Colonic mucosa (tissue), 4 donors: ENCODE measurements at regions of chr21 and their contacts with region 1.

Region 1: GRCh38 chr21:38126669-38127303 is 130.0 kb upstream of the KCNJ15 start:
- DNase-seq: peak; percentile 47
- H3K4me3 ChIP-seq: no peak overlapping the region
- H3K27ac ChIP-seq: no peak overlapping the region
- H3K4me1 ChIP-seq: no peaks in the 10 kb centered on the region
- H3K27me3 ChIP-seq: no peaks in the 10 kb centered on the region
- CTCF ChIP-seq: peak; percentile 63

Region 2: DNA sequence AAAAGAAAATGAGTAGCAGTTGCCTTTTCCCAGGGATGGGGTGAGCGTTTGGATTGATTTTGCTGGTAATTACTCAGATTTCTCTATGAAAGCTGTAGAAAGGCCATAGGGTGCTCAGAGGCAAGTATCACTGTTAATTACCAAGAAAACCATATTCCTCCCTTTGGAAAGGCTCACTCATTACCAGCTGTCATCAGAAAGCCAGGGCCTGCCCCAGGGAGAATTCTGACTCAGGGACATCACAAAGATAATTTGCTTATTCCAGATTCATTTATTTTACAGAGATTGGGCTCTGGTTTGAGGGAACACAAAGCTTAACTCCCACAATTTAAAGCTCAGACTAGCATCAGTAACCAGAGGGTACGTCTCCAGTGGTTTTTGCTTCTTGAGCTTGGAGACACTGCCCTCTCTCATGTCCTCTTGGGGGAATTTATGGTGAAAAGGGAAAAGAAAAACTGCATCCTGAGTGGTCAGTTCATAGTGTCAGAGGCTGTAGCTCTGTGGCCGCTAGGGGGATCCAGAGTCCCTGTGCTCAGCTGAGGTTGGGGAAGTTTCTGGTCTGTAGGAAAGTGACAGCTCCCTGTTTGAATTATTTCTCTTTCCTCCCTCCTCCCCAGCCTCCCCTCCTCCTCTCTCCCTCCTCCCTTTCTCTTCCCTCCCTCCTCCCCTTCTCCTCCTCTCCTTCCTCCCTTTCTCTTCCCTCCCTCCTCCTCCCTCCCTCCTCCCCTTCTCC is 414.8 kb before region 1 on chr21:
- intact Hi-C with region 1: loop called (anchors 5 kb)
- DNase-seq: peak; percentile 55
- H3K4me3 ChIP-seq: no peak overlapping the region
- H3K27ac ChIP-seq: no peak overlapping the region
- H3K4me1 ChIP-seq: no peaks in the 10 kb centered on the region
- H3K27me3 ChIP-seq: no peaks in the 10 kb centered on the region
- CTCF ChIP-seq: peak; percentile 63

Region 3: DNA sequence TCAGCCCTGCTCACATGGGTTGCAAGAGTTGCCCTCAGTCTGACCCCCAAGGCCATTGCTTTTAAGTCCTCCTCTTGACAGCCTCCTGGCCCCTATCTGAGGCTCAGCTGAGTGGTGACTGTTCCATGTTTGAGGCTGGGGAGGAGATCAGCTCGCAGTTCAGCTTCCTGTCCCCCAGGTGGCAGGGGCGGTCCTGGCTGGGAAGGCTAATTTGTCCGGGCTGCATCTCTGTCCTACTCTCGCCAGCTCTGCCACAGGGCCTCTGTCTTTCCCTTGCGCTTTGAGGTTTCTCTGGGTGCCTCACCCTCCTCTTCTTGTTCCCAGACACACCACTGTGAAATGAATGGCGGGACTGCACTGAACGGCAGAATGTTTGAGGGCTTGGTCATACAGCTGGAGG is 367.8 kb before region 1 on chr21:
- intact Hi-C with region 1: loop called (anchors 5 kb)
- DNase-seq: peak; percentile 28
- H3K4me3 ChIP-seq: no peak overlapping the region
- H3K27ac ChIP-seq: no peak overlapping the region
- H3K4me1 ChIP-seq: no peaks in the 10 kb centered on the region
- H3K27me3 ChIP-seq: no peaks in the 10 kb centered on the region
- CTCF ChIP-seq: peak; percentile 41

Region 4: DNA sequence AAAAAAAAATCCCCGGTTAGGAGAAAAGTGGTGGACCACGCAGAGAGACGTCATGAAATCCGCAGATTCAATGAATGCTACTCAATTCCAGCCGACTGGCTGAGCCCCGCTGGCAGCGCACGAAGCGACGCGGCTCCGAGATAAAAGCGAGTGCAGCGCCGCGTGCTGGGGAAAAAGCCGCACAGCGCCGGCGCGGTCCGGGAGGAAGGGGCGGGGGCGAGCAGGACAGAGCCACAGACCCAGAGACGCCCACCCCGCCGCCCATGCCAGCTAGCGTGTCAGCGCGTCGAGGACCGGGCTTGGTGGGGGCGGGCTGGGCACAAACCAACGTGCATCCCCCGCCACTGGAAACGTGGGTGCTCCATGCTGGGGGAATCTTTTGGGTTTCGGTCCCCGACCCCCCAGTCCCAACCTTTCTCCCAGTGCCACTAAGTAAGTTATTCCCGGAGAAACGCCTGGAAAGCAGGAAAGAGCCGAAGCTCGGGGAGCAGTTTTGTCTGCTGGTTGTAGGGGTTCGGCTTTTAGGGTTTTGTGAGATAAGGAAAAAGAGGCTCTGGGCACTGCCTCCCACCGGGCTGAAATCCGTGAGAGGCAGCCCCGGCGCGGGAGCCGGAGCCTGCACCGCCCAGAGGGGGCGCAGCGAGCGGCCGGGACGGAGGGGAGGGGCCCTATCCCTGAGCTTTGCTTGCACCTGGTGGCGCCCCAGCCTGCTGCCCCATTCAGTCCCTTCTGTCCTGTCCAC is 210.3 kb before region 1 on chr21 and contains the start of gene KCNJ6:
- intact Hi-C with region 1: no loop called
- DNase-seq: no peak
- H3K4me3 ChIP-seq: no peak within 1 kb of the TSS
- H3K27ac ChIP-seq: no peak within 1 kb of the TSS
- H3K4me1 ChIP-seq: no peaks in the 10 kb centered on the region
- H3K27me3 ChIP-seq: peaks cover 33% of the 10 kb centered on the region
- CTCF ChIP-seq: peak; percentile 44
- total RNA-seq, gene KCNJ6: 0.05 to 0.21 TPM

Region 5: GRCh38 chr21:39232861-39233291 is 1106.1 kb after region 1 on chr21:
- intact Hi-C with region 1: no loop called
- DNase-seq: no peak
- H3K4me3 ChIP-seq: no peak overlapping the region
- H3K27ac ChIP-seq: no peak overlapping the region
- H3K4me1 ChIP-seq: no peaks in the 10 kb centered on the region
- H3K27me3 ChIP-seq: no peaks in the 10 kb centered on the region
- CTCF ChIP-seq: no peak